ENCODE measurements at regions of chr13 and their contacts with region 1.

Region 1: GRCh38 chr13:21115231-21115630 is 53.8 kb upstream of the LATS2 start:
- DNase-seq: no peak
- ATAC-seq: no peak
- H3K4me3 ChIP-seq: no peak overlapping the region
- H3K27ac ChIP-seq: no peak overlapping the region
- H3K4me1 ChIP-seq: no peaks in the 10 kb centered on the region
- H3K27me3 ChIP-seq: peaks cover 0 to 1% of the 10 kb centered on the region in 2 donors

Region 2: DNA sequence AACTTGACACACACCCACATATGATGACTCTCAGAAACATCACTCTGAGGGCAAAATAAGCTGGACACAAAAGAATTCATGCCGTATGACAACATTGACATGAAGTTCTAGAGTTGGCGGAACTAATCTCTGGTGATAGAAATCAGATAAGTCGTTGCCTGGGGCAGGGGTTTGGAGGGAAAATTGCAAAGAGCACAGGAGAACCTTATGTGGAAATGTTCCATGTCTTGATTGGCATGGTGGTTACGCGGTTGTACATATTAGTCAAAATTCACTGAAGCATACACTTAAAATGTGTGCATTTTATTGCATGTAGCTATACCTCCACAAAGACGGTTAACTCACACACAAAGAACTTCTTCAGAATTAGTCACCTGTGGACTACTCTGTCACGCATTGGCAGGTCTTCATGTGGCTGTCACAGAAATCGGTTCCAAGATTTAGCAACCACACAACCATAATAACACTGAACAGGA is 745.3 kb before region 1 on chr13:
- intact Hi-C with region 1: no loop called
- DNase-seq: no peak
- ATAC-seq: no peak
- H3K4me3 ChIP-seq: no peak overlapping the region
- H3K27ac ChIP-seq: no peak overlapping the region
- H3K4me1 ChIP-seq: no peaks in the 10 kb centered on the region
- H3K27me3 ChIP-seq: no peaks in the 10 kb centered on the region

Region 3: GRCh38 chr13:21075011-21075898 is 40.0 kb before region 1 on chr13:
- intact Hi-C with region 1: no loop called
- DNase-seq: peak; percentile 59 to 85
- ATAC-seq: peak; percentile 84
- H3K4me3 ChIP-seq: peak overlapping the region; percentile 11 to 69
- H3K27ac ChIP-seq: no peak overlapping the region
- H3K4me1 ChIP-seq: peaks cover 0 to 2% of the 10 kb centered on the region in 2 donors
- H3K27me3 ChIP-seq: no peaks in the 10 kb centered on the region

Region 4: GRCh38 chr13:21218351-21219035 is 103.3 kb after region 1 on chr13:
- intact Hi-C with region 1: no loop called
- DNase-seq: no peak
- ATAC-seq: no peak
- H3K4me3 ChIP-seq: no peak overlapping the region
- H3K27ac ChIP-seq: no peak overlapping the region
- H3K4me1 ChIP-seq: no peaks in the 10 kb centered on the region
- H3K27me3 ChIP-seq: no peaks in the 10 kb centered on the region

Region 5: DNA sequence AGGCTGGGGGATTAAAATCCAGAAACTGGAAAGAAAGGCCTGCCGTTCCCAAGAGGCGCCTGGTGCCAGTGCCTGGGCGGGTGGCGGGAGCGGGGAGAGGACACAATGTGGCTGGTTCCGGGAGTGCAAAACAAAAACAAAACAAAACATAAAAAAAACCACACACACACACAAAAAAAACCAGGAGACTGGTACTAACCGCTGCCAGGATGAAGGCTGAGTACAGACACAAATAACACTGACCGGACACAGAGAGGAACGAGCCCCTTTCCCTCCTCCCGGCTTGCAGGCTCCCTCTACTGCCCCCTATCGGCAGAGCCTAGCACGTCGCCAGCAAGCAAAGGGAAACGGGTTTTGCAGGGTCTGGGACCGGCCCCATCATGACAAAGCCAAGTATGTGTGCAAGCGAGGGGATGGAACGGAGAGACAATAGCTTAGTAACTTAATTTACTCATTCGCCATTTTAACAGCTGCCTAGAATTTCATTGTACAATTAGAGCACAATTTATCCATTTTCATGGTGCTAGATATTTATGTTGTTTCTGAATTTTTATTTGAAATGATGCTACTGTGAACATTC is 361.8 kb after region 1 on chr13:
- intact Hi-C with region 1: loop called (anchors 5 to 10 kb)
- DNase-seq: peak; percentile 88 to 91
- ATAC-seq: peak; percentile 91
- H3K4me3 ChIP-seq: peak overlapping the region; percentile 2 to 11
- H3K27ac ChIP-seq: no peak overlapping the region
- H3K4me1 ChIP-seq: no peaks in the 10 kb centered on the region
- H3K27me3 ChIP-seq: no peaks in the 10 kb centered on the region

Measured in aorta (tissue), 5 donors.